Psoas muscle (tissue), 8 donors: ENCODE measurements at regions of chr5 and their contacts with region 1.

Region 1: GRCh38 chr5:136249678-136250266 is 56.8 kb upstream of the SMIM32 start:
- DNase-seq: peak; percentile 30 to 64
- ATAC-seq: peak; percentile 56 to 73 (median 64)
- H3K4me3 ChIP-seq: no peak overlapping the region
- H3K27ac ChIP-seq: no peak overlapping the region
- H3K4me1 ChIP-seq: no peaks in the 10 kb centered on the region
- H3K27me3 ChIP-seq: no peaks in the 10 kb centered on the region
- CTCF ChIP-seq: peak; percentile 70

Region 2: GRCh38 chr5:136182618-136183017 is 67.2 kb before region 1 on chr5:
- intact Hi-C with region 1: no loop called
- DNase-seq: no peak
- ATAC-seq: no peak
- H3K4me3 ChIP-seq: no peak overlapping the region
- H3K27ac ChIP-seq: no peak overlapping the region
- H3K4me1 ChIP-seq: no peaks in the 10 kb centered on the region
- H3K27me3 ChIP-seq: no peaks in the 10 kb centered on the region
- CTCF ChIP-seq: no peak

Region 3: GRCh38 chr5:136424835-136425584 is 175.2 kb after region 1 on chr5:
- intact Hi-C with region 1: loop called in 1 of 2 experiments (anchors 2 kb)
- DNase-seq: peak; percentile 51 to 71
- ATAC-seq: no peak
- H3K4me3 ChIP-seq: no peak overlapping the region
- H3K27ac ChIP-seq: no peak overlapping the region
- H3K4me1 ChIP-seq: no peaks in the 10 kb centered on the region
- H3K27me3 ChIP-seq: no peaks in the 10 kb centered on the region
- CTCF ChIP-seq: peak; percentile 43

Region 4: DNA sequence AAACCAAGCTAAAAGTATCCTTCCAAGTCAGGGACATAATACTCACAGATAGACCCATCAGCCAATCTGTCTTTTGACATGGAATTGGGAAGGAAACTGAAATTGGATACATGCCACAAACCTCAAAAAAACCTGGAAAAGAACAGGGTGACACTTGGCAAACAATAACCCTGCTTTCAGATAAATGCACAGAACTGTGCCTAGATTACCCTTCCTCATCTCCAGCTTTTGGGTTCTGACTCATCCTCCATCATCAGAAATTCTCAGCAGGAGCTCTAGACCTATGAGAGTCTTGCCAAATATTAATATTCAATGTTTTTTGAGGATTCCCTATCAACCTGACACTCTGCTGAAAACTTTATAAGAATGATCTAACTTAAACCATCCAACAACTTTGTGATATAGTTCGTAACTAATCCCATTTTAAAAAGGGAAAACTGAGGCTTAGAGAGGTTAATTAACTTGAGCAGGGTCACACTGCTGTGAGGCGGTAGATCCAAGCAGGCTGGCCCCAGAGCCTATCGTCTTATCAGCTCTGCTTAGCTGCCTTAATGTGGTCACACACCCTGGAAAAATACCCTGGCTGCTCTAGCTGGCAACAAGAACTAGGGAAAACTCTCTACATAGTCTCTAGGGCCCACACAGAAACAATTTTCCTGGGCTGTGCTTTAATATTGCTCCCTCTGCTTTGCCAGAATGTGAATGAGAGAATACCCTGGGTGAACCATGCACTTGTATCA is 272.6 kb after region 1 on chr5:
- intact Hi-C with region 1: no loop called
- DNase-seq: no peak
- ATAC-seq: no peak
- H3K4me3 ChIP-seq: no peak overlapping the region
- H3K27ac ChIP-seq: no peak overlapping the region
- H3K4me1 ChIP-seq: no peaks in the 10 kb centered on the region
- H3K27me3 ChIP-seq: peaks cover 0 to 2% (median 0%) of the 10 kb centered on the region in 3 donors
- CTCF ChIP-seq: no peak

Region 5: DNA sequence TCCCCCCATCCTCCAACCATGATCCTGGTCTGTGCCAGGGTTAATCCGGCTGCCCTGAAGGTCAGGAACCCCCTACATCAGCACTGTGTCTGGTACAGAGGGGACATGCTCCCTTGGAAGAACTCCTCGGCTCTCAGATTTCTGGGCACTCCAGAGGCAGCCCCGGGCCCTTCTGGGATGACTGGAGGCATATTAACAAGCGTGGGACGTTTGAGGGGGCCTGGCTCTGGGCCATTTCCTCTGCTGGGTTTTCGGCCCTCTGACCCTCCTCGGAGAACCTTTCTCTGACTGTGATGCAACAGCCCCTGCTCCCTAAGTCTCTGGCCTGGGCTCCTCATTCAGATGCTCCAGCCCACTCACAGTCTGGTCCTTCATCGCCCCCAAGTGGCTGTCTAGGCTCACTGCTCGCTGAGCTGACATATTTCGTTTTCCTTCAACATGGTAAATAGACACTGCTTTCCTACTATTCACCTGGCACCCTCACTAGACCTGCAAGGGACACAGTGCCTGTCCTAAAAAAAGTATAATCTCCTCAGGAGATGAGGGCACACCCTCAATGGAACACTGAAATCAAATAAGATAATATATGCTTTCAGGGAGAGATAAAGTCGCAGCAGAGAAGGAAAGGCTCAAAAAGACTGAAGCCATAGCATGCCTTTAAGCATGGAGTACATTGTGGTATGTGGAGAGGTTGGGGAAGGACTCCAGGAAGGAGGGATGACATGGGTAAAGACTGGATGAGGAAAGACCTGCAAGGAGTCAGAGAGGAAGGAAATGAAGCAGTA is 520.3 kb after region 1 on chr5:
- intact Hi-C with region 1: loop called (anchors 1 to 5 kb)
- DNase-seq: peak; percentile 57 to 67
- ATAC-seq: peak; percentile 39 to 86 (median 83)
- H3K4me3 ChIP-seq: no peak overlapping the region
- H3K27ac ChIP-seq: no peak overlapping the region
- H3K4me1 ChIP-seq: no peaks in the 10 kb centered on the region
- H3K27me3 ChIP-seq: no peaks in the 10 kb centered on the region
- CTCF ChIP-seq: peak; percentile 60